ENCODE measurements at regions of chr11 and their contacts with region 1.

Region 1: GRCh38 chr11:61908730-61909315 is 8.5 kb downstream of the RAB3IL1 start:
- DNase-seq: no peak
- H3K4me3 ChIP-seq: peak overlapping the region in 1 of 3 donors; percentile 46
- H3K27ac ChIP-seq: peak overlapping the region in 1 of 2 donors; percentile 85
- H3K4me1 ChIP-seq: no peaks in the 10 kb centered on the region
- H3K27me3 ChIP-seq: no peaks in the 10 kb centered on the region
- CTCF ChIP-seq: no peak
- POLR2A ChIP-seq: no peak

Region 2: GRCh38 chr11:61967116-61967923 is 58.5 kb after region 1 on chr11 and contains the start of gene FTH1:
- intact Hi-C with region 1: no loop called
- DNase-seq: peak; percentile 87 to 95
- H3K4me3 ChIP-seq: peak within 1 kb of the TSS; percentile 85 to 98 (median 89)
- H3K27ac ChIP-seq: peak within 1 kb of the TSS; percentile 98 to 100
- H3K4me1 ChIP-seq: peaks cover 28 to 30% of the 10 kb centered on the region in 2 donors
- H3K27me3 ChIP-seq: no peaks in the 10 kb centered on the region
- CTCF ChIP-seq: peak in 1 of 3 donors; percentile 13
- POLR2A ChIP-seq: peak; percentile 99
- total RNA-seq, gene FTH1: 2,151 to 6,439 (median 3,491) TPM

Region 3: DNA sequence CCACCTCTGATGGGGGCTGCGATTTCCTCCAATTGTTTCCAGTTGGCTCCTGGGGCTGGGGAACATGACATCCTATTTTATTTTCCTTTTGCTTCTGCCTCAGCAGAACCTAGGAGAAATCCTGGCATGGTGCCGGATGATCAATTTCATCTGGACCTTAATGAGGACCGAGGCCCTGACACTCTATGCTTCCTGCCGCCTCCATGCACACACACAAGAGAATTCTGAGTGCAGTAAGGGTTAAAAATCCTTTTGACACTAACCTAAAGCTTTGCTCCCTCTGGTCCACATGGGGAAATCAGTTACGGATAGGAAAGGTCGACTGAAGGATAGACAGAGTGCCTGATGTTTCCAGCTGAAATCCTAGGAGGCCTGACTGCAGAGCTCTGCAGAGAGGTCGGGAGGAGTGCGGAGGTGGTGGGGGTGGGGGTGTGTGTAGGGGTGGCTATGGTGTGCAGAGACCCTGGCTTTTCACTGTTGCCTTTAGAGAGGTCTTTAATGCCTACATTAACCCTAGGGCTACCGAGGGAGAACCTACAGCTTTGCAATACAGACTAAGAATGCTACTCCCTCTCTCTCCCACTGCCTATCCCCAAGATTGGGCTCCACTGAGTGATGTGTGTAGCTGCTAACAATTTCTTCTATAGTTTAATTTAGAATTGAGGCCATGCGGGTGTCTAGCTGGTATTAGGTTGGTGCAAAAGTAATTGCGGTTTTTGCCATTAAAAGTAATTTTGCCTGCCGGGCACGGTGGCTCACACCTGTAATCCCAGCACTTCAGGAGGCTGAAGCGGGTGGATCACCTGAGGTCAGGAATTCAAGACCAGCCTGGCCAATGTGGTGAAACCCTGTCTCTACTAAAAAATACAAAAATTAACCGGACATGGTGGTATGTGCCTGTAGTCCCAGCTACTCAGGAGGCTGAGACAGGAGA is 161.4 kb after region 1 on chr11:
- intact Hi-C with region 1: loop called (anchors 10 kb)
- DNase-seq: no peak
- H3K4me3 ChIP-seq: no peak overlapping the region
- H3K27ac ChIP-seq: no peak overlapping the region
- H3K4me1 ChIP-seq: no peaks in the 10 kb centered on the region
- H3K27me3 ChIP-seq: no peaks in the 10 kb centered on the region
- CTCF ChIP-seq: no peak
- POLR2A ChIP-seq: no peak